Psoas muscle (tissue), 8 donors: ENCODE measurements at regions of chr6 and their contacts with region 1.

Region 1: DNA sequence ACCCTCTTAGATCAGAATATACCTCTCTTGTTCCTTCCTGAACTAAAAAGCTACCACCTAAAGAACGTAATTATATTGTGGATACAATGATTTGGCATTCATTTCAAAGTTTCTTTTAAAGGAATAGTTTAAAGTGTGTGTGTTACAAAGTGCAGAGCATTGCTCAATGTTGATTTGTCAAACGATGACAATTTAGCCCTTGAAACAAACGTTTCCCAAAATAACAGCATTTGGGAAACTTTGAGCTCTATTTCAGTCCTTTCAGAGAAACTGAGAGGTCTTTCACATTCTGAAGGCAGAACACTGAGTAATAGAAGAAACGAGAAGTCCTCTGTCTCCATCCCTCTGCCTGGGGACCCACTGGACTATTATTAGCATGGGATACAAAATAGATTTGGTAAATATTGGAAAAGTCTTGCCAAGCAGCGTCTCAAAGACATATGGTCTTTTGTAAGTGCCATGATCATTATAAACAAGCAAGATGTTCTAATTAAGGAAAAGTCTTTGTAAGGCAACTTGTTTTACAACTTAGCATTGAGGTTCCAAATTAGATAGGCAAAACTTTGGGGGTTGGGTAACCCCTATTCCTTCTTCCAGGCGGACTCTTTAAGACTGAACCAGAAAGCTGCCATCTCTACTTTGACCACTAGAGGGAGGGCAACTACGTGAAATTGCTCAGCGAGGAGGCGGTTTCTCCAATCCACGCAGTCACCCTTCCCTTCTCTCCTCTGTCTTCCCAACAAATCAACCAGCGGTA is 208.8 kb downstream of the RNF144B start:
- DNase-seq: no peak
- ATAC-seq: peak; percentile 77 to 85 (median 80)
- H3K4me3 ChIP-seq: no peak overlapping the region
- H3K27ac ChIP-seq: no peak overlapping the region
- H3K4me1 ChIP-seq: no peaks in the 10 kb centered on the region
- H3K27me3 ChIP-seq: no peaks in the 10 kb centered on the region
- CTCF ChIP-seq: peak; percentile 96

Region 2: GRCh38 chr6:19851241-19852089 is 1255.5 kb after region 1 on chr6:
- intact Hi-C with region 1: loop called in 1 of 2 experiments (anchors 10 kb)
- DNase-seq: no peak
- ATAC-seq: peak; percentile 73 to 84 (median 79)
- H3K4me3 ChIP-seq: no peak overlapping the region
- H3K27ac ChIP-seq: no peak overlapping the region
- H3K4me1 ChIP-seq: no peaks in the 10 kb centered on the region
- H3K27me3 ChIP-seq: no peaks in the 10 kb centered on the region
- CTCF ChIP-seq: peak; percentile 88

Region 3: DNA sequence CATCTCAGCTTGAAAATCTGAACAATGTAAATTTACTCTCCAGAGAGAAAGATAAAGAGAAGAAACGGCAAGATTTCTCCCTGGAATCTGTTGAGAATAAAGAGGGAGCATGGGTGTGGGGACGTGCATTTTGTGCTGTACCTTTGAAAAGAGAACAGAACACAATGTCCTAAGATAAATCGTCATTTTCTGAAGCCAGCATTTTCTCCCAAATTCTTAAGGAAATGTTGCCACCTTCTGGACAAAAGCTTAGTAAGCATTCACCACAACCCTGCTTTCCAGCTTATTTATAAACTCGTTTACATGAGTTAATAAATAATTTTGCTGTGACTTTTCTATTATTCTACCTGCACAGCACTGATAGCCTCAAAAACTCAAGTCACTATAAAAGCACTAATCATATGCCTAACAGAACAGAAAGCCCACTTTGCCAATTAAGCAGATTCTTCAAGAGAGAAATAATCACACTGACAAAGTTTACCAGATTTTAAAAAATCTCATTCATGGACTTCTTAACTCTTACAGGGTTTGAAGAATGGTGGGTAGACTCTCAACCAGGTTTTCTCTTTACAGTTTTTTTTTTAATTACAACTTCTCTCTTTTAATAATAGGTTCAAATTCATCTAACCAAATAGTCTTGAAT is 1460.5 kb after region 1 on chr6:
- intact Hi-C with region 1: loop called (anchors 10 kb)
- DNase-seq: no peak
- ATAC-seq: no peak
- H3K4me3 ChIP-seq: no peak overlapping the region
- H3K27ac ChIP-seq: no peak overlapping the region
- H3K4me1 ChIP-seq: no peaks in the 10 kb centered on the region
- H3K27me3 ChIP-seq: no peaks in the 10 kb centered on the region
- CTCF ChIP-seq: peak; percentile 37

Region 4: DNA sequence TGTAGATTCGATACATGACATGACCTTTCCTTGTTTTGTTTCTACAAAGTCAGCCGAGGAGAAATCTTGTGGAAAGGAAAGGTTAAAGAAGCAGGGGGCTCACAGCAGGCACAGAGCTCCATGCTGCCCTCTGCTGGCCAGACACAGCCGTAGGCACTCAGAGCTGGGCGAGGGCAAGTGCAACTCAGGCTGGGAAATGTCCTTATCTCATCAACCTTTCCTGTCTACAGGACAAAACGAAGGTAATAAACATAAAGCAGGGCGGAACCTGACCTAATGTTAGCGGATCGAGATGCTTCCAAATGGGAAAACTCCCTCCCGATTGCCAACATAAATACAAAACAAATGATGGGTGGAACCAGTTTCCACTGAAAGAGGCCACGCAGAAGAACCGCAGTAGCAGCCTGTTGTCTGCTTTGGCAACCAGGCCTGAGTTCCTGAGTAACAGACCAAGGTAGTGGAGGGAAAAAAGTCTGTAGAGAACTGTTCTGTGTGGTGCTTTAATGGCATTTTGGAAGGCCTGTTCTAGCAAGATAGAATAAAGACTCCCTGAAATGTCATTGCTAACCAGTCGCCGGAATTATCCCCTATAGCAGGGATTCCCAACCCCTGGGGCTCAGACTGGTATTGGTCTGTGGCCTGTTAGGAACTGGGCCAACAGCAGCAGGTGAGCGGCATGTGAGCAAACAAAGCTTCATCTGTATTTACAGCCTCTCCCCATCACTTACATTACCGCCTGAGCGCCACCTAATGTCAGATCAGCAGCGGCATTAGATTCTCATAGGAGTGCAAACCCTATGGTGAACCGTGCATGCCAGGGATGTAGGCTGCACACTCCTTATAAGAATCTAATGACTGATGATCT is 1531.1 kb after region 1 on chr6:
- intact Hi-C with region 1: loop called in 1 of 2 experiments (anchors 5 kb)
- DNase-seq: peak; percentile 66 to 81
- ATAC-seq: peak; percentile 79 to 90 (median 87)
- H3K4me3 ChIP-seq: peak overlapping the region; percentile 5
- H3K27ac ChIP-seq: peak overlapping the region; percentile 5
- H3K4me1 ChIP-seq: peaks cover 7% of the 10 kb centered on the region
- H3K27me3 ChIP-seq: no peaks in the 10 kb centered on the region
- CTCF ChIP-seq: peak; percentile 89